ENCODE measurements at regions of chr20 and their contacts with region 1.

Region 1: DNA sequence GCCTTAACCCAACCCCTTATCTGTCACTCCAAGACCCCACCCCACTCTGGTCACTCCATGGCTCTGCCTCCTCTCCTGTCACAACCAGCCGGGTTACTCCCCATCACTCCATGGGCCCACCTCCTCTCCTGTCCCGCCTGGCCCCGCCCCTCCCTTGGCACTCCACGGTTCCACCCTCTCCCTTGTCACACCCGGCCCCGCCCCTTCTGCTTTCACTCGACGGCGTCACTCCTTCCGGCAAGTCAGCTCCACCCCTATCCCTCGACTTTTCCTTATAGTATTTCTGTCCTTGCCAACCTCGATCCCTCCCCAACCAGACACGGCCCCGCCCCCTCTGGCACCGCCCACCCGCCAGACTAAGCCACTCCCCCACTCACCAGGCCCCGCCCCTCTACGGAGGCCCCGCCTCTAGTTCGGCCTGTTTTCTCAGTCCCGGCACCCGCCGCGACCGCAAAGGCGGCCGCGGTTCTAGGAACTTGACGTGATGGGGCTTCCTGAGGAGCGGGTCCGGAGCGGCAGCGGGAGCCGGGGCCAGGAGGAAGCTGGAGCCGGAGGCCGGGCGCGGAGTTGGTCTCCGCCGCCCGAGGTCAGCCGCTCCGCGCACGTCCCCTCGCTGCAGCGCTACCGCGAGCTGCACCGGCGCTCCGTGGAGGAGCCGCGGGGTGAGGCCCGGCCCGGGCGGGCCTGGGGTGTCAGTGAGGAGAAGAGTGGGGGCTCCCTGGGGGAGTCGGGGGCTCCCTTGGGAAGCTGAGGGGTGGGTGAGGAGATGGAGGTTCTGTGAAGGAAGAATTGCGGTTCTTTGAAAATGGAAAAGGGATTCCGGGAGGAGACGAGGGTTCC is at the start of gene ACSS2:
- DNase-seq: peak; percentile 91 to 99 (median 94)
- ATAC-seq: peak; percentile 81
- H3K4me3 ChIP-seq: peak within 1 kb of the TSS; percentile 70
- H3K4me3 Mint-ChIP-seq: peak within 1 kb of the TSS; percentile 90
- H3K27ac ChIP-seq: peak within 1 kb of the TSS; percentile 11 to 42
- H3K27ac Mint-ChIP-seq: peak within 1 kb of the TSS; percentile 81
- H3K4me1 ChIP-seq: peaks cover 51% of the 10 kb centered on the region
- H3K4me1 Mint-ChIP-seq: peaks cover 66% of the 10 kb centered on the region
- H3K27me3 ChIP-seq: no peaks in the 10 kb centered on the region
- H3K27me3 Mint-ChIP-seq: no peaks in the 10 kb centered on the region
- CTCF ChIP-seq: no peak
- total RNA-seq, gene ACSS2: 15.6 to 18.8 TPM

Region 2: GRCh38 chr20:34516247-34517113 is 359.9 kb before region 1 on chr20 and contains the start of gene DYNLRB1:
- CTCF ChIA-PET with region 1: no interaction called
- POLR2A ChIA-PET with region 1: interaction called, 4 read pairs
- intact Hi-C with region 1: loop called in 1 of 2 experiments (anchors 10 kb)
- DNase-seq: peak; percentile 88 to 96 (median 94)
- ATAC-seq: peak; percentile 74
- H3K4me3 ChIP-seq: peak within 1 kb of the TSS; percentile 82
- H3K4me3 Mint-ChIP-seq: peak within 1 kb of the TSS; percentile 99
- H3K27ac ChIP-seq: peak within 1 kb of the TSS; percentile 60 to 80
- H3K27ac Mint-ChIP-seq: peak within 1 kb of the TSS; percentile 94
- H3K4me1 ChIP-seq: peaks cover 30% of the 10 kb centered on the region
- H3K4me1 Mint-ChIP-seq: peaks cover 70% of the 10 kb centered on the region
- H3K27me3 ChIP-seq: no peaks in the 10 kb centered on the region
- H3K27me3 Mint-ChIP-seq: no peaks in the 10 kb centered on the region
- CTCF ChIP-seq: no peak
- total RNA-seq, gene DYNLRB1: 38.3 to 40.3 TPM

Region 3: DNA sequence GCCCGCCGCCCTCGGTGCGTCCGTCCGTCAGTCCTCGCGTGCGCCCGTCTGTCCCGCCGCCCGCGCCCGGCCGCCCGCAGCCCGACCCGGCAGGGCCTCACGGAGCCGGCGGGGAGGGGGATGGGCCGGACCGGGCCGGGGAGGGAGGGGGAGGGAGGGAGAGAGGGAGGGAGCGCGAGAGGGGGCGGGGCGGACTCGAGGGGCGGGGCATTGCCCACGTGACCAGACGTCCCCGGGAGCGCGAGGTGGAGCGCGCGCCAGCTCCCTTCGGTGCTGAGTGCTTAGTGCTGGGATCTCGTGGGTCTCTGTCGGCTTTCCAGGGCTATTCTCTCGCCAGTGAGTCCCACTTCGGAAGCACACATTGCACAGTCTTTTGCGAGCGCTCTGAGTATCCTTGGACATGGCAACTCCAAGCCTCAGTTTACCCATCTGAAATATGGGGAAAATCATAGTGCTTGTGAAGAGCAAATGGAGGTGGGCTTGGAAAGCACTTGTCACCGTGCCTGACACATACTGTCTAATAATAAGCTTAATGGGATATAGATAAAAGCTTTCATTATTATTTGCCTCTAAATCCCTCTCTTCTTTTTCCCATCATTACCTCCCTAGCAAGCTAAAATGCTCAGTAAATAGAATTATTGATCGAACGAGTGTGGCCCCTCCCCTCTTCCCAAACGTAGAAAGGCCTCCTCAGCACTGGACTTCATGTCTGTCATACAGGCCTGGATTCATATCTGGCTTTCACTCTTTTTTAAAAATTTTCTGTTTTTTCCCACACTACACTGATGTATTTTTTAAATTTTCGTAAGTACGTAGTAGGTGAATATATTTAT is 50.6 kb before region 1 on chr20 and contains the start of gene NCOA6:
- CTCF ChIA-PET with region 1: no interaction called
- POLR2A ChIA-PET with region 1: interaction called, 3 read pairs
- intact Hi-C with region 1: loop called in 1 of 2 experiments (anchors 2 kb)
- DNase-seq: peak; percentile 77 to 95 (median 84)
- ATAC-seq: peak; percentile 75
- H3K4me3 ChIP-seq: peak within 1 kb of the TSS; percentile 70
- H3K4me3 Mint-ChIP-seq: peak within 1 kb of the TSS; percentile 99
- H3K27ac ChIP-seq: peak within 1 kb of the TSS; percentile 35 to 66
- H3K27ac Mint-ChIP-seq: peak within 1 kb of the TSS; percentile 92
- H3K4me1 ChIP-seq: peaks cover 35% of the 10 kb centered on the region
- H3K4me1 Mint-ChIP-seq: peaks cover 47% of the 10 kb centered on the region
- H3K27me3 ChIP-seq: no peaks in the 10 kb centered on the region
- H3K27me3 Mint-ChIP-seq: no peaks in the 10 kb centered on the region
- CTCF ChIP-seq: no peak
- total RNA-seq, gene NCOA6: 14.6 to 16.3 TPM

Region 4: GRCh38 chr20:34922654-34923424 is 46.5 kb after region 1 on chr20:
- CTCF ChIA-PET with region 1: no interaction called
- POLR2A ChIA-PET with region 1: no interaction called
- intact Hi-C with region 1: no loop called
- DNase-seq: no peak
- ATAC-seq: no peak
- H3K4me3 ChIP-seq: no peak overlapping the region
- H3K4me3 Mint-ChIP-seq: no peak overlapping the region
- H3K27ac ChIP-seq: no peak overlapping the region
- H3K27ac Mint-ChIP-seq: no peak overlapping the region
- H3K4me1 ChIP-seq: peaks cover 12% of the 10 kb centered on the region
- H3K4me1 Mint-ChIP-seq: peaks cover 11% of the 10 kb centered on the region
- H3K27me3 ChIP-seq: no peaks in the 10 kb centered on the region
- H3K27me3 Mint-ChIP-seq: no peaks in the 10 kb centered on the region
- CTCF ChIP-seq: no peak

Region 5: GRCh38 chr20:34955232-34956040 is 79.1 kb after region 1 on chr20 and contains the starts of genes GSS and MYH7B:
- CTCF ChIA-PET with region 1: interaction called, 21 read pairs
- POLR2A ChIA-PET with region 1: interaction called, 13 read pairs
- intact Hi-C with region 1: loop called (anchors 1 kb)
- DNase-seq: peak; percentile 90 to 98 (median 96)
- ATAC-seq: peak; percentile 92
- H3K4me3 ChIP-seq: peak within 1 kb of the TSS; percentile 87
- H3K4me3 Mint-ChIP-seq: peak within 1 kb of the TSS; percentile 94
- H3K27ac ChIP-seq: peak within 1 kb of the TSS; percentile 62 to 70
- H3K27ac Mint-ChIP-seq: peak within 1 kb of the TSS; percentile 91
- H3K4me1 ChIP-seq: peaks cover 19% of the 10 kb centered on the region
- H3K4me1 Mint-ChIP-seq: peaks cover 23% of the 10 kb centered on the region
- H3K27me3 ChIP-seq: no peaks in the 10 kb centered on the region
- H3K27me3 Mint-ChIP-seq: no peaks in the 10 kb centered on the region
- CTCF ChIP-seq: no peak
- total RNA-seq, gene GSS: 24.3 to 24.7 TPM
- total RNA-seq, gene MYH7B: 0.53 to 0.58 TPM

Region 6: GRCh38 chr20:35092524-35093266 is 216.3 kb after region 1 on chr20 and contains the start of gene TRPC4AP:
- CTCF ChIA-PET with region 1: no interaction called
- POLR2A ChIA-PET with region 1: interaction called, 4 read pairs
- intact Hi-C with region 1: loop called (anchors 2 to 10 kb)
- DNase-seq: peak; percentile 78 to 96 (median 86)
- ATAC-seq: peak; percentile 98
- H3K4me3 ChIP-seq: peak within 1 kb of the TSS; percentile 99
- H3K4me3 Mint-ChIP-seq: peak within 1 kb of the TSS; percentile 91
- H3K27ac ChIP-seq: peak within 1 kb of the TSS; percentile 72 to 76
- H3K27ac Mint-ChIP-seq: peak within 1 kb of the TSS; percentile 83
- H3K4me1 ChIP-seq: peaks cover 40% of the 10 kb centered on the region
- H3K4me1 Mint-ChIP-seq: peaks cover 53% of the 10 kb centered on the region
- H3K27me3 ChIP-seq: no peaks in the 10 kb centered on the region
- H3K27me3 Mint-ChIP-seq: no peaks in the 10 kb centered on the region
- CTCF ChIP-seq: peak; percentile 85
- total RNA-seq, gene TRPC4AP: 56.3 to 60.6 TPM

Measured in CD4-positive, alpha-beta T cell (primary cell).